ENCODE measurements at regions of chr7 and their contacts with region 1.

Region 1: DNA sequence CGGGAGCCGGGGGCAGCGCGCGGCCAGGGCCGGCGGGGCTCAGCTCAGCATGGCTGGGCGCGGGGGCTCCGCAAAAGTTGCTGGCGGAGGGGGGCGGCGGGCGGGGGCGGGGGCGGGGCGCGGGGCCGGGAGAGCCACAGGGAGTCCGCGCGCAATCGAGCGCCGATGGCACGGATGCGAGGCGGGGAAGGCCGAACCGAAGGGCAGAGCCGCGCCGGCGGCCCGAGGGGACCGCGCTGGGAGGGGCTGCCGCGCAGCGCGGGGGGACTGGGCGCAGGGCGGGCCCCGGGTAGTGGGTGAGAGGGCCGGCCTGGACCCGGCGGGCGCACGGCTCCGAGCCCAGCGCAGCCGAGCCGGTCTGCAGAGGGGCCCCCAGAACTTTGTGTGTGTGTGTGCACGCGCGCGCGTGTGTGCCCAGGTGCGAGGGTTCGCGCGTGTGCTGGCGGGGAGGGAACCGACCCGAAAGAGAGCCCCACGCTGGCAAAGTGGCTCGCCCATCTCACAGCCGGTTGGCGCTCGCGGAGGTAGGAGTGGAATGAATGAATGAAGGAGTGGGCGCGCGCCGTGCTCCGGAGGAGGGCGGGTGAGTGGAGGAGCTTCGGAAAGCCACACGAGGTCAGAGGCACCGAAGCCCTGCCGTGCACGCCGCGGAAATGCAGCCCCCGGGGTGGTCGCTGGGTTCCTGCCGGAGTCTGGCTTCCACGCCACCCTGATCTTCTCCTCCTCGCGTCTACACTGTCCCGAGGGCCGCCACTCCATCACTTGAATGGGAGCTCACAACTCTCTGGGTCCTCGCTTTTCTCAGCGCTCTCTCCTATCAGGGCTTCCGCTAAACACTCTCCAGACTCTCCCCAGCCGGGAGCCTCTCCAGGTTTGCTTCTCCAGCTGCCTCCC is at the start of gene HIPK2:
- DNase-seq: peak; percentile 54 to 71
- ATAC-seq: peak; percentile 57 to 69
- H3K4me3 ChIP-seq: peak within 1 kb of the TSS; percentile 81 to 91 (median 86)
- H3K27ac ChIP-seq: peak within 1 kb of the TSS; percentile 91 to 99 (median 96)
- H3K4me1 ChIP-seq: peaks cover 30 to 32% of the 10 kb centered on the region in 2 donors
- H3K27me3 ChIP-seq: no peaks in the 10 kb centered on the region
- CTCF ChIP-seq: no peak
- POLR2A ChIP-seq: peak in 1 of 2 donors; percentile 55
- total RNA-seq, gene HIPK2: 30.5 to 77.4 (median 58.9) TPM

Region 2: DNA sequence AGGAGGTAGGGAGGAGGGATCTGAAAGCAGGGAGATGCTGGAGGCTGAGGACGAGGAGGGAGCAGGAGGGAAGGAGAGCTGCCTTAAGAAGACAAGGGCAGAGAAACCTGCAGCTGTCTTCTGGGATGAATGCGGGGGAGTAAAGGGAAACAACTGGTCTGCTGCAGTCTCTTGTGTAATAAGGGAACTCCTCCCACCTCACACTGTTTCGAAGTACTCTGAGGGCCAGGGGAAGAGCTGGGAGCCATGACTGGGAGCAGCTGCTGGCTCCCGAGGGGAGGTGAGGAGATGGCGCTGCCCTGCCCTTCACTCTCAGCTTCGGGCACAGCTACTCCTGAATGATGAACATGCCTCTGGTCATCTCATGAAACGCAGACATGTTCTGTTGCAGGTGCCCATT is 189.6 kb before region 1 on chr7:
- in situ Hi-C with region 1: no loop called
- intact Hi-C with region 1: no loop called
- DNase-seq: peak; percentile 34 to 68
- ATAC-seq: peak; percentile 92 to 98
- H3K4me3 ChIP-seq: no peak overlapping the region
- H3K27ac ChIP-seq: peak overlapping the region; percentile 39 to 66 (median 56)
- H3K4me1 ChIP-seq: peaks cover 7% of the 10 kb centered on the region in 2 donors
- H3K27me3 ChIP-seq: no peaks in the 10 kb centered on the region
- CTCF ChIP-seq: no peak
- POLR2A ChIP-seq: no peak

Region 3: GRCh38 chr7:139691253-139691781 is 86.9 kb before region 1 on chr7:
- in situ Hi-C with region 1: no loop called
- intact Hi-C with region 1: loop called (anchors 5 kb)
- DNase-seq: peak; percentile 65 to 92
- ATAC-seq: peak; percentile 84 to 93
- H3K4me3 ChIP-seq: no peak overlapping the region
- H3K27ac ChIP-seq: peak overlapping the region; percentile 72 to 81 (median 78)
- H3K4me1 ChIP-seq: peaks cover 31 to 35% of the 10 kb centered on the region in 2 donors
- H3K27me3 ChIP-seq: no peaks in the 10 kb centered on the region
- CTCF ChIP-seq: no peak
- POLR2A ChIP-seq: no peak

Region 4: GRCh38 chr7:139855498-139856270 is 77.5 kb after region 1 on chr7:
- in situ Hi-C with region 1: no loop called
- intact Hi-C with region 1: loop called (anchors 2 kb)
- DNase-seq: no peak
- ATAC-seq: no peak
- H3K4me3 ChIP-seq: no peak overlapping the region
- H3K27ac ChIP-seq: no peak overlapping the region
- H3K4me1 ChIP-seq: peaks cover 0 to 7% of the 10 kb centered on the region in 2 donors
- H3K27me3 ChIP-seq: no peaks in the 10 kb centered on the region
- CTCF ChIP-seq: no peak
- POLR2A ChIP-seq: no peak

Region 5: GRCh38 chr7:140003913-140004382 is 225.8 kb after region 1 on chr7:
- in situ Hi-C with region 1: loop called in 3 of 4 experiments (anchors 10 kb)
- intact Hi-C with region 1: loop called (anchors 5 kb)
- DNase-seq: no peak
- ATAC-seq: no peak
- H3K4me3 ChIP-seq: no peak overlapping the region
- H3K27ac ChIP-seq: no peak overlapping the region
- H3K4me1 ChIP-seq: no peaks in the 10 kb centered on the region
- H3K27me3 ChIP-seq: no peaks in the 10 kb centered on the region
- CTCF ChIP-seq: peak in 4 of 5 experiments; percentile 16 to 42 (median 26)
- POLR2A ChIP-seq: no peak